IMR-90 (cell line): ENCODE measurements at regions of chr2 and their contacts with region 1.

Region 1: DNA sequence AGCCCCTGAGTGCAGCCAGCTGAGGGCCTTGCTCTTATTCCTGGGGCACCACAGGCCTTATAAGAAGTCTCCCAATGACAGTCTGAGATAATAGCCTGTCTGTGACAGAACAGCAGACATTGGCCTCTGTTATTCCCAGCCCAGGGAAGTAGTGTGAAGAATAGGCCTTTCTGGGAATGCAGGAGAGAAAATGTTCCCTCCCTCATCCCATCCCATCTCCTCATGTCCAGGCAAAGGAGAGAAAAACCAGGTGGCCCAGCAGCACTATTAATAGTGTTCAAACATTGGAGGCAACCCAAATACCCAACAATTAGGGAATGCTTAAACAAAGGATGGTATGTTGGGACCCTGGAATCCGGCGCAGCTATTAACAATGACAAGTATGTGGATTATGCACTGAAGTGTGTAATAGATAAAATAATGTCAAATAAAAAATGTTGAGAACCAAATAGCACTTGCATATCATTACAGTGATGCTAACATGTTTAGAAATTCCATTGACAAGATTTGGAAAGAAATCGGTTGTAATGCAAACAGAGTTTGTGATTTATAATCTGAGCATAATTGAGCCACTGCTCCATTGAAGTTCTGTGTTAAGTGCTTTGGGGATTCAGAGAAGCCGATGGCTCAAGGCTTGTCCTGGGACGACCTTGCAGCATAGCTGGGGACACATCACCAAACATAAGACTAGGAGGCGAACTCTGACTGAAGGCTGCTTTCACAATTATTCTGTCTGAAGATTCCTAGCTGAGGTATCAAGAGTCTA is 69.3 kb downstream of the LBH start:
- DNase-seq: peak; percentile 96
- ATAC-seq: peak; percentile 71
- H3K4me3 ChIP-seq: no peak overlapping the region
- H3K27ac ChIP-seq: peak overlapping the region; percentile 88
- H3K4me1 ChIP-seq: peaks cover 25% of the 10 kb centered on the region
- H3K27me3 ChIP-seq: no peaks in the 10 kb centered on the region
- CTCF ChIP-seq: no peak
- POLR2A ChIP-seq: no peak; the same call in 1 of the 2 replicates
- RAD21 ChIP-seq: no peak; the same call in none of the 2 replicates

Region 2: GRCh38 chr2:29786361-29786760 is 514.3 kb before region 1 on chr2:
- CTCF ChIA-PET with region 1: no interaction called
- POLR2A ChIA-PET with region 1: no interaction called
- dilution Hi-C with region 1: no loop called
- in situ Hi-C with region 1: no loop called
- intact Hi-C with region 1: no loop called
- DNase-seq: no peak
- ATAC-seq: no peak
- H3K4me3 ChIP-seq: no peak overlapping the region
- H3K27ac ChIP-seq: no peak overlapping the region
- H3K4me1 ChIP-seq: no peaks in the 10 kb centered on the region
- H3K27me3 ChIP-seq: peaks cover 6% of the 10 kb centered on the region; the same call in 1 of the 2 replicates
- CTCF ChIP-seq: no peak
- POLR2A ChIP-seq: no peak
- RAD21 ChIP-seq: no peak

Region 3: GRCh38 chr2:30231212-30231995 is 69.2 kb before region 1 on chr2 and contains the start of gene LBH:
- CTCF ChIA-PET with region 1: no interaction called
- POLR2A ChIA-PET with region 1: interaction called, 10 read pairs
- dilution Hi-C with region 1: no loop called
- in situ Hi-C with region 1: no loop called
- intact Hi-C with region 1: loop called (anchors 1 kb)
- DNase-seq: peak; percentile 90
- ATAC-seq: peak; percentile 73
- H3K4me3 ChIP-seq: peak within 1 kb of the TSS; percentile 84
- H3K27ac ChIP-seq: peak within 1 kb of the TSS; percentile 84
- H3K4me1 ChIP-seq: peaks cover 13% of the 10 kb centered on the region
- H3K27me3 ChIP-seq: no peaks in the 10 kb centered on the region
- CTCF ChIP-seq: 0 out of 2 replicates have a peak, but pooled peaks have one; percentile 7
- POLR2A ChIP-seq: peak; percentile 100
- RAD21 ChIP-seq: no peak
- total RNA-seq, gene LBH: 155 and 158 TPM in 2 replicates

Region 4: GRCh38 chr2:30261695-30262211 is 38.9 kb before region 1 on chr2:
- CTCF ChIA-PET with region 1: no interaction called
- POLR2A ChIA-PET with region 1: no interaction called
- dilution Hi-C with region 1: no loop called
- in situ Hi-C with region 1: no loop called
- intact Hi-C with region 1: no loop called
- DNase-seq: no peak
- ATAC-seq: no peak; the same call in 1 of the 2 replicates
- H3K4me3 ChIP-seq: no peak overlapping the region
- H3K27ac ChIP-seq: no peak overlapping the region
- H3K4me1 ChIP-seq: peaks cover 23% of the 10 kb centered on the region
- H3K27me3 ChIP-seq: no peaks in the 10 kb centered on the region
- CTCF ChIP-seq: no peak
- POLR2A ChIP-seq: no peak; the same call in 1 of the 2 replicates
- RAD21 ChIP-seq: no peak

Region 5: GRCh38 chr2:30287857-30288513 is 12.7 kb before region 1 on chr2:
- CTCF ChIA-PET with region 1: interaction called, 3 read pairs
- POLR2A ChIA-PET with region 1: interaction called, 10 read pairs
- dilution Hi-C with region 1: no loop called
- in situ Hi-C with region 1: no loop called
- intact Hi-C with region 1: no loop called
- DNase-seq: no peak
- ATAC-seq: no peak
- H3K4me3 ChIP-seq: no peak overlapping the region
- H3K27ac ChIP-seq: peak overlapping the region; percentile 89; the same call in 1 of the 2 replicates
- H3K4me1 ChIP-seq: peaks cover 26% of the 10 kb centered on the region
- H3K27me3 ChIP-seq: no peaks in the 10 kb centered on the region
- CTCF ChIP-seq: no peak
- POLR2A ChIP-seq: no peak
- RAD21 ChIP-seq: no peak

Region 6: DNA sequence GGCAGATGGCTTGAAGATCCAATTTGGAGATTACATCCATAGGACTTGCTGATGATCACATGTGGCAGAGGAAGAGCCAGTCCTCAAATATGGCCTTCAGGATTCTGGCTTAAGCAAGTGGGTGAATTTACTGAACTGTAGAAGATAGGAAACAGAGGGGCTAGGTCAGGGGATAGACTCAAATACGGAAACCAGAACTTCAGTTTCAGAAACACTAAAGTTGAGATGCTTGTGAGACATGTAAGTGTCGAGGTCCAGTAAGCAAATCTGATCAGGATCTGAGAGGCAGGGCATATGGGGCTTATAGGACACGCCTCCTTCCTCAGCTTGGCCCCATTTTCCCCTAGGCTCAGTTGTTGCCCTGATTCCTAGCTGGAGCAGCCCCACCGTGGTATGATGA is 38.4 kb after region 1 on chr2:
- CTCF ChIA-PET with region 1: no interaction called
- POLR2A ChIA-PET with region 1: no interaction called
- dilution Hi-C with region 1: no loop called
- in situ Hi-C with region 1: no loop called
- intact Hi-C with region 1: no loop called
- DNase-seq: no peak
- ATAC-seq: no peak
- H3K4me3 ChIP-seq: no peak overlapping the region
- H3K27ac ChIP-seq: no peak overlapping the region
- H3K4me1 ChIP-seq: peaks cover 6% of the 10 kb centered on the region
- H3K27me3 ChIP-seq: no peaks in the 10 kb centered on the region
- CTCF ChIP-seq: no peak
- POLR2A ChIP-seq: no peak
- RAD21 ChIP-seq: no peak

Region 7: DNA sequence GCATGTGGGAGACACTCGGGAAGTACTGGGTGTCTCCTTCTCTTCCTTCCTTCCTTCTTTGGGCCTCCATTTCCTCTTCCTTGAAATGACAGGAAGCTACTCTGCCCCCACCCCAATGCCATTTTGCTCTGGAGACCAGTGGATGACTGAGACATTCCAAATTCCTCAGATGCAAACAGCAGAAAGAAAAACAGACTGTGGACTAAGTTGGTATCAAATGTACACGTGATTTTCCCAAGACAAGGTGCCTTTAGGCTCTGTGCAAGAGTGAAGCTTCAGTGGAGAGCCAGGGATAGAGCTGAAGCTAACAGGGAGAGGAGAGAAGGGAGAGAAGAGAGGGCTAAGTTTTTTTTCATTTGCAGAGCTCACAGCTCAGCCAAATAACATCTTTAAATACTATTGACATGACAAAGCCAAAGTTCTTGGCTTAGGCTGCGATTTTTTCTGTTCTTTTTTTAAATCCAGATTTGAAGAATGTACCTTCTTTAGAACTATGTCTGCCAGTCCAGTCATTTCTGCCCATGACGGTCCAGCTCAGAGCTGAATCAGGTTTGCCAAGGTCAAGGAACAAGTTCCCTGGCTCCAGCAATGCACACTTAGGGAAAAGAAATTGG is 61.9 kb after region 1 on chr2:
- CTCF ChIA-PET with region 1: no interaction called
- POLR2A ChIA-PET with region 1: no interaction called
- dilution Hi-C with region 1: no loop called
- in situ Hi-C with region 1: no loop called
- intact Hi-C with region 1: loop called (anchors 2 kb)
- DNase-seq: peak; percentile 70
- ATAC-seq: peak; percentile 68
- H3K4me3 ChIP-seq: no peak overlapping the region
- H3K27ac ChIP-seq: peak overlapping the region; percentile 83
- H3K4me1 ChIP-seq: peaks cover 40% of the 10 kb centered on the region
- H3K27me3 ChIP-seq: no peaks in the 10 kb centered on the region
- CTCF ChIP-seq: no peak
- POLR2A ChIP-seq: no peak; the same call in 1 of the 2 replicates
- RAD21 ChIP-seq: no peak

Region 8: DNA sequence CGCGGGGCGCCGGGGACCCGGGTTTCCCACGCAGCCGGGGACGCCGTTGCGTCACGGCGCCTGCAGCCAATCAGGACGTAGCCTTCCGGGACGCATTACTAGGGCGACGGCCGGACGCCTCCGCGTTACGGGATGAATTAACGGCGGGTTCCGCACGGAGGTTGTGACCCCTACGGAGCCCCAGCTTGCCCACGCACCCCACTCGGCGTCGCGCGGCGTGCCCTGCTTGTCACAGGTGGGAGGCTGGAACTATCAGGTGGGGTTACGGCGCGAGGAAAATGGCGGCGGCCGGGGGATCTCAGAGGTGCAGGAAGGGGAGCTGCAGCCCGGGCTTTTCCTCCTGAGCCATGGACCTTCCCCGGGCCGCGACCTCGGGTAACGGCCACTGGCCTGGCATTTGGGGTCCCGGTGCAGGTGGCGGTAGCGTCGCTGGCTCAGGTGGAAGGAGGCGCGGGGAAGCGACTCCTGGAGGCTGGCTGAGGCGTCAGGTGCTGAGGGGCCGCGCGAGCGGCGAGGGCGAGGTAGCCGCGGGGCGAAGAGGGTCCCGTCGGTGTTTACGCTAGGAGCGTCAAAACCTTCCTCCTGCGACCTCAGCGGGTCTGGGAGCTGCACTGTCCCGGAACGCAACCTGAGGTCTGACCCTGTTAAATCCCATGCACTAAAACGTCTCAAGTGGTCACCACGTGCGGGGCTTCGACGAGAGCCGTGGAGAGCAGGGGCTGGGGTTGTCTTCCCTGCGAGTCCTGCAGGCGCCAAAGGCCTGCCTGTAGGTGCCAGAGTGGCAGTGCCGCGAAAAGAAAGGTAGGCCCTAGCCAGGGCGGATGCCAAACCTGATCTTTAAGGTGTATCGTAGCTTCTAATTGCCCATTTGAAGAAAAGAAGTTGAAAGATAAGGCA is 146.8 kb after region 1 on chr2 and contains the start of gene LCLAT1:
- CTCF ChIA-PET with region 1: no interaction called
- POLR2A ChIA-PET with region 1: no interaction called
- dilution Hi-C with region 1: no loop called
- in situ Hi-C with region 1: no loop called
- intact Hi-C with region 1: loop called (anchors 2 kb)
- DNase-seq: peak; percentile 72
- ATAC-seq: peak; percentile 96
- H3K4me3 ChIP-seq: peak within 1 kb of the TSS; percentile 86
- H3K27ac ChIP-seq: peak within 1 kb of the TSS; percentile 85
- H3K4me1 ChIP-seq: peaks cover 10% of the 10 kb centered on the region
- H3K27me3 ChIP-seq: no peaks in the 10 kb centered on the region
- CTCF ChIP-seq: no peak
- POLR2A ChIP-seq: no peak; the same call in 1 of the 2 replicates
- RAD21 ChIP-seq: peak; percentile 1; the same call in 1 of the 2 replicates
- total RNA-seq, gene LCLAT1: 11.5 and 18.3 TPM in 2 replicates

Region 9: GRCh38 chr2:30691948-30692828 is 391.5 kb after region 1 on chr2:
- CTCF ChIA-PET with region 1: interaction called, 3 read pairs
- POLR2A ChIA-PET with region 1: no interaction called
- dilution Hi-C with region 1: no loop called
- in situ Hi-C with region 1: no loop called
- intact Hi-C with region 1: loop called (anchors 5 kb)
- DNase-seq: peak; percentile 37
- ATAC-seq: peak; percentile 84
- H3K4me3 ChIP-seq: no peak overlapping the region
- H3K27ac ChIP-seq: no peak overlapping the region
- H3K4me1 ChIP-seq: peaks cover 18% of the 10 kb centered on the region
- H3K27me3 ChIP-seq: no peaks in the 10 kb centered on the region
- CTCF ChIP-seq: peak; percentile 42; the same call in 1 of the 2 replicates
- POLR2A ChIP-seq: no peak
- RAD21 ChIP-seq: peak; percentile 48